Natural killer cell (primary cell): ENCODE measurements at regions of chr11 and their contacts with region 1.

Region 1: GRCh38 chr11:2151500-2152257 is 9.3 kb downstream of the INS start:
- DNase-seq: peak; percentile 76 to 91
- ATAC-seq: peak; percentile 81 to 87 (median 83)
- H3K4me3 ChIP-seq: no peak overlapping the region
- H3K4me3 Mint-ChIP-seq: peak overlapping the region; percentile 56
- H3K27ac ChIP-seq: no peak overlapping the region
- H3K27ac Mint-ChIP-seq: no peak overlapping the region
- H3K4me1 ChIP-seq: peaks cover 7% of the 10 kb centered on the region
- H3K4me1 Mint-ChIP-seq: peaks cover 9 to 10% of the 10 kb centered on the region in 2 donors
- H3K27me3 ChIP-seq: peaks cover 15% of the 10 kb centered on the region
- H3K27me3 Mint-ChIP-seq: peaks cover 19 to 39% of the 10 kb centered on the region in 2 donors
- CTCF ChIP-seq: peak; percentile 76

Region 2: DNA sequence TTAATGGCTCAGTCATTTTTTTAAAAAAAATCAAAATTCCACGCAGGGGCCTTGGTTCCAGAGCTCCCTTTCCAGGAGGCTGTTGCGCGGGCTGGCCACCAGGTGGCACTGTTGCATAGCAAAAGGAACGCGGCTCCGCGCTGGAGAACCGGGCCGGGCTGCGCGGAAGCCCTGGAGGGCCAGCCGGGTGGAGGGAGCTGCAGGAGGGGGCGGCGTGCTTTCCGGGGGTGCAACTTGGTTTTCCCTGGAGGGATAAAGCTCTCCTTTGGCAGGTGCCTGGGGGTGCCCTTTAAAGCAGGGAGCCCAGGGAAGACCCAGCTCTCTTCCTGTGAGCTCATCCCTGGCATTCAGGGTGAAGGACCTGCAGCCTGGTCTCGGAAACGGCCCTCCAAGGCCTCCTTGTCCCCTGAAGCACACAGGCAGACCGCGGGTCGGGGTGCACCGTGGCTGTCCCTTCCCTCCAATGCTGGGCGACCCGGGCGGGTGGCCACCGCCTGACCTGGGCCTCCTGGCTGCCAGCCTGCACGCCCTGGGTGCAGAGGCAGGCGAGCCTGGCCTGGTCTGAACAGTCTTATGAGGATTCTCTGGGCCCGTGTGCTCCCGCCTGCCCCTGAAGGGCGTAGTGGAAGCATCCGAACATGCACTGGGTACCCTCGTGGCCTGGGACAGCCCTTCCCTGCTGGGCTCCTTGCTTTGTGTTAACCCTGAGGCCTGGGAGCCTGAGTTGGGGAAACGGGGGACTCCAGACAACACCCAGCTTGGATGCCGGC is 498.7 kb before region 1 on chr11:
- intact Hi-C with region 1: loop called (anchors 1 kb)
- DNase-seq: peak; percentile 82 to 86
- ATAC-seq: peak; percentile 79 to 99 (median 95)
- H3K4me3 ChIP-seq: no peak overlapping the region
- H3K4me3 Mint-ChIP-seq: no peak overlapping the region
- H3K27ac ChIP-seq: no peak overlapping the region
- H3K27ac Mint-ChIP-seq: no peak overlapping the region
- H3K4me1 ChIP-seq: peaks cover 4% of the 10 kb centered on the region
- H3K4me1 Mint-ChIP-seq: no peaks in the 10 kb centered on the region
- H3K27me3 ChIP-seq: no peaks in the 10 kb centered on the region
- H3K27me3 Mint-ChIP-seq: peaks cover 0 to 27% of the 10 kb centered on the region in 2 donors
- CTCF ChIP-seq: peak; percentile 97

Region 3: GRCh38 chr11:1837171-1838076 is 314.3 kb before region 1 on chr11:
- intact Hi-C with region 1: loop called (anchors 1 kb)
- DNase-seq: peak; percentile 80 to 91
- ATAC-seq: peak; percentile 89 to 96 (median 92)
- H3K4me3 ChIP-seq: no peak overlapping the region
- H3K4me3 Mint-ChIP-seq: no peak overlapping the region
- H3K27ac ChIP-seq: no peak overlapping the region
- H3K27ac Mint-ChIP-seq: no peak overlapping the region
- H3K4me1 ChIP-seq: peaks cover 54% of the 10 kb centered on the region
- H3K4me1 Mint-ChIP-seq: peaks cover 0 to 20% of the 10 kb centered on the region in 2 donors
- H3K27me3 ChIP-seq: no peaks in the 10 kb centered on the region
- H3K27me3 Mint-ChIP-seq: peaks cover 0 to 6% of the 10 kb centered on the region in 2 donors
- CTCF ChIP-seq: peak; percentile 98

Region 4: GRCh38 chr11:1882519-1883238 is 269.0 kb before region 1 on chr11:
- intact Hi-C with region 1: loop called (anchors 2 kb)
- DNase-seq: peak; percentile 77 to 90
- ATAC-seq: peak; percentile 81 to 88 (median 87)
- H3K4me3 ChIP-seq: no peak overlapping the region
- H3K4me3 Mint-ChIP-seq: no peak overlapping the region
- H3K27ac ChIP-seq: no peak overlapping the region
- H3K27ac Mint-ChIP-seq: peak overlapping the region in 1 of 2 donors; percentile 80
- H3K4me1 ChIP-seq: peaks cover 58% of the 10 kb centered on the region
- H3K4me1 Mint-ChIP-seq: peaks cover 9 to 47% of the 10 kb centered on the region in 2 donors
- H3K27me3 ChIP-seq: no peaks in the 10 kb centered on the region
- H3K27me3 Mint-ChIP-seq: no peaks in the 10 kb centered on the region
- CTCF ChIP-seq: peak; percentile 83

Region 5: GRCh38 chr11:2137202-2138071 is 14.2 kb before region 1 on chr11:
- intact Hi-C with region 1: no loop called
- DNase-seq: no peak
- ATAC-seq: no peak
- H3K4me3 ChIP-seq: no peak overlapping the region
- H3K4me3 Mint-ChIP-seq: no peak overlapping the region
- H3K27ac ChIP-seq: no peak overlapping the region
- H3K27ac Mint-ChIP-seq: no peak overlapping the region
- H3K4me1 ChIP-seq: peaks cover 13% of the 10 kb centered on the region
- H3K4me1 Mint-ChIP-seq: peaks cover 0 to 11% of the 10 kb centered on the region in 2 donors
- H3K27me3 ChIP-seq: peaks cover 26% of the 10 kb centered on the region
- H3K27me3 Mint-ChIP-seq: peaks cover 43 to 53% of the 10 kb centered on the region in 2 donors
- CTCF ChIP-seq: no peak